Prostate gland (tissue), 2 donors: ENCODE measurements at regions of chr16 and their contacts with region 1.

Region 1: GRCh38 chr16:69565671-69566239 is at the start of gene NFAT5:
- DNase-seq: peak; percentile 88
- H3K4me3 ChIP-seq: peak within 1 kb of the TSS; percentile 99 to 100
- H3K27ac ChIP-seq: peak within 1 kb of the TSS; percentile 99 to 100
- H3K4me1 ChIP-seq: no peaks in the 10 kb centered on the region
- H3K27me3 ChIP-seq: no peaks in the 10 kb centered on the region
- CTCF ChIP-seq: peak in 2 of 4 experiments; percentile 7 to 21
- POLR2A ChIP-seq: peak; percentile 96
- total RNA-seq, gene NFAT5: 41.4 to 52.7 TPM

Region 2: DNA sequence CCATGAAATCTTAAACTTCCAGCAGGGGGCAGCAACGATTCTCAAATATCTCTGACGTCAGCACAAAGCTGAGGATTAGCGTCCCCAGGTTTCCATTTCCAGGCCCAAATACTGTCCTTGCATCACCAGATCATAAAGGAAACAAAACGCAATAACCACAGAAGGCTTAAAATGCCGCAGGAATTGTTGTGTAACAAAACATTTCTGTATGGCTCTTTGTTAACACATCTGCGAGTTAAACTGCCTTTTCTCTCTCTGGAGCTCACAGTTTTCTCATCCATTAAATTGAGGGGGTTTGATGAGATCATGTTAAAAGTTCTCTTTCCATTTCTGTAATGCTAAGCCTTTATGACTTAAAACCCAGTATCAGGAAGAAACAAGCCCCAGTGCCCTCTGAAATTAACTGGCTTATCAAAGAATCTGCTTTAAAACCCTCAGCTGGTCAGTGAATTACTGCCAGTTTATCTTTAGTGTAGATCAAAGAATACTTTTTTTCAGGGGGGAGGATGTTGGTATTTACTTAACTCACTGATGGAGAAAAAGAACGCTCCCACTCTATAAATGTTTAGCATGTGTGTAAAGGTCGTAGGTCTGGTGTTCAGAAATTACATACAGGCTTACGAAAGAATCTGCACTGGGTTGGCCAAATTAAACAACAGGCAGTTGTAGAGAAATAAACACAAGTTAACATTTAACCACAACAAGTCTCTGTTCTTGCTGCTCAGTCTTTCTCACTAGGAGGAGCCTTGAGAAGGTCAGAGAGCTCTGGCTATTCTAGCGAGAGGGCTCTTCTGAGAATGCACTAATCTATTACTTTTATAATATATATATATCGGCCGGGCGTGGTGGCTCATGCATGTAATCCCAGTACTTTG is 169.3 kb before region 1 on chr16:
- intact Hi-C with region 1: loop called (anchors 5 kb)
- DNase-seq: peak; percentile 82
- H3K4me3 ChIP-seq: no peak overlapping the region
- H3K27ac ChIP-seq: peak overlapping the region; percentile 80 to 87
- H3K4me1 ChIP-seq: peaks cover 6% of the 10 kb centered on the region
- H3K27me3 ChIP-seq: no peaks in the 10 kb centered on the region
- CTCF ChIP-seq: peak; percentile 71 to 94 (median 82)
- POLR2A ChIP-seq: no peak

Region 3: DNA sequence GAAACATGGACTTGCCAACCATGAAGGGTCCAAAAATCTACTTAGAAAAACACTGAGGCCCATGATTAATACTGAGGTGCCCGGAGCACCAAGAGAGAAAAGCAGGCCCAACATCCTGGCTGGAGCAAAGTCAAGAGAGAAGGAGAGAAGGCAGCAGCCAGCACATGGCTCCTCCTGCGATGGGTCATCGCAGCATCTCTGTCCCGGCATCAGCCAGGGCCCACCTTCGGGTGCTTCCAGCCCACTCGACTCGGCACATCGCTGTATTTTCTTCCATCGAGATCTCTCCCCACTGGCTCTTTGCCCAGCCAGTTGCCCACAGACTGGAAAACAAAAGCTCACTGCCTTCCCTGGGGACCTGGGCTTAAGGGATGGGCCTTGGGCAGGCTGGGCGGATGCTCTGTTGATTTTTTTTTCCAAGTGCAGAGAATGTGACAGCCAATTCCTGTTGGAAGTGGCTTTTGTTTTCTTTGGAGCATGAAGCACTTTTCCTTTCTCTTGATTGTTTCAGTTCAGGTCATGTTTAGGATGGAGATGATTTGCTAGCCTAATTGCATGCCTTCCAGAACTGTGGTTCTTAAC is 83.3 kb before region 1 on chr16:
- intact Hi-C with region 1: loop called (anchors 10 kb)
- DNase-seq: peak; percentile 21
- H3K4me3 ChIP-seq: no peak overlapping the region
- H3K27ac ChIP-seq: peak overlapping the region; percentile 74 to 75
- H3K4me1 ChIP-seq: peaks cover 8% of the 10 kb centered on the region
- H3K27me3 ChIP-seq: no peaks in the 10 kb centered on the region
- CTCF ChIP-seq: no peak
- POLR2A ChIP-seq: no peak

Region 4: GRCh38 chr16:69618307-69618706 is 52.6 kb after region 1 on chr16:
- intact Hi-C with region 1: loop called (anchors 5 kb)
- DNase-seq: no peak
- H3K4me3 ChIP-seq: no peak overlapping the region
- H3K27ac ChIP-seq: no peak overlapping the region
- H3K4me1 ChIP-seq: peaks cover 3% of the 10 kb centered on the region
- H3K27me3 ChIP-seq: no peaks in the 10 kb centered on the region
- CTCF ChIP-seq: no peak
- POLR2A ChIP-seq: no peak

Region 5: DNA sequence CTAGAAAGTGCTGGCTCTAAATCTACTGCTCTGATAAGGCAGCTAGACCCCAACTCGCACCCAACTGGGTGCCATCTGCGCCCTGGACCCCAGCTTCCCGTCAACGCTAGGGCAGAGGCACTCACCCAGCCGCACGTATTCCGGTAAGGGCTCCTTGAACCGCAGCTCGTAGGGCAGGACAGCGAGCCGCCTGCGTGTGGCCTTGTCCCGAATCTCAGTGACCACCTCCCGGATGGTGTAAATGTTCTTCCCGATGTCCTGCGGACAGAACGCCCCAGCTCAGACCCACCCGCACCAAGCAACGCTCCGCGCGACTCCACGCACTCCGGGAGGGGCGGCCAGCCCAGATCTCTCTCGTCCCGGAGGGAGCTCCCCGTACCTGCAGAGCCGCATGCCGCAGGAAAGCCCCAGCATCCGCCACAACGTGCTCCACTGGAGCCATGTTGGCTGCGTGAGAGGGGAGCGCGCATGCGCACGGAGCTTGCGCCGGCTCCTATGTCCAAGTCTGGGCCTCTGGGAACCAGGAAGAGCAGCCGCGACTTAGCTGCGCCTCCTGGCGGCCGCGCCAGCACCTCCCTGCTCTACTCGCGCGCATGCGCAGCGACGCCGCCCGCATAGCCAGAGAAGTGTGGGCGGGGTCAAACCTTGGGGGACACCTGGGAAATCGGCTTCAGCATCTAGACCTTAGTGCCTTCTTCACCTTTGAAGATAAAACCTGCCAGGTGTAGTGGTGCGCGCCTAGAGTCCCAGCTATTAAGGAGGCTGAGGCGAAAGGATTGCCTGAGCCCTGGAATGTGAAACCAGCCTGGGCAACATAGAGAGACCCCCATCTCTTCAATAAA is 188.9 kb after region 1 on chr16 and contains the start of gene NOB1:
- intact Hi-C with region 1: loop called (anchors 2 kb)
- DNase-seq: peak; percentile 95
- H3K4me3 ChIP-seq: peak within 1 kb of the TSS; percentile 50 to 78
- H3K27ac ChIP-seq: peak within 1 kb of the TSS; percentile 49 to 60
- H3K4me1 ChIP-seq: no peaks in the 10 kb centered on the region
- H3K27me3 ChIP-seq: no peaks in the 10 kb centered on the region
- CTCF ChIP-seq: peak; percentile 94 to 100 (median 100)
- POLR2A ChIP-seq: peak; percentile 70
- total RNA-seq, gene NOB1: 29.8 to 44.1 TPM